CD8-positive, alpha-beta T cell (primary cell): ENCODE measurements at regions of chr1 and their contacts with region 1.

Region 1: DNA sequence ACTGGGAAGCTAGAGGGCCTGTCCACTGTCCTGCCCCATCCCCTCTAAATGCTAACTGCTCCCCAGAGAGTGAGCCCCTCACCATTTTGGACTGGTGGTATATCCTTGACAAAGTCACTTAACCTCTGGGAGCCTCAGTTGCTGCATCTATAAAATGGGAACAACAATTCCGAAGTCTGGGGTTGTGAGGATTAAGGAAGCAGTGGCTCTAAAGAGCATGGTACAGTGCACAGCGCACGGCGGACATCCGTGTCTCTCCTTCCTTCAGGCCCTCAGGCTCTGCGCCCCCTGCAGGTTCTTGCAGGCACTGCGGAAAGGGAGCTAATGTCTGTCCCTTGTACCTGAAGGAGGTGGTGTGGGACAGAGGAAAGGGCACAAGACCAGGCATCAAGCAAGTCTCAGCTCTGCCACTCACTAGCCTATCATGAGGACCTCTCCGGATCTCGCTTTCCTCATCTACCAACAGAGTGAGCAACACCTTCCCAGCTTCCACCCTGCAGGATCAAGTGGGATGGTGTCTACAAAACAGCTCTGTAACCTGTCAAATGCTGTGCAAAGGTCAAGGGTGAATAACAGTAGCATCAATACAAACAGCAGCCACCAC is 20.1 kb downstream of the ECE1 start:
- DNase-seq: peak; percentile 68 to 88 (median 80)
- ATAC-seq: peak; percentile 97
- H3K4me3 ChIP-seq: no peak overlapping the region
- H3K4me3 Mint-ChIP-seq: no peak overlapping the region
- H3K27ac ChIP-seq: no peak overlapping the region
- H3K27ac Mint-ChIP-seq: no peak overlapping the region
- H3K4me1 ChIP-seq: no peaks in the 10 kb centered on the region
- H3K4me1 Mint-ChIP-seq: peaks cover 12% of the 10 kb centered on the region
- H3K27me3 ChIP-seq: no peaks in the 10 kb centered on the region
- H3K27me3 Mint-ChIP-seq: no peaks in the 10 kb centered on the region
- CTCF ChIP-seq: peak; percentile 92

Region 2: GRCh38 chr1:21184276-21184675 is 85.9 kb before region 1 on chr1:
- CTCF ChIA-PET with region 1: no interaction called
- POLR2A ChIA-PET with region 1: no interaction called
- intact Hi-C with region 1: no loop called
- DNase-seq: no peak
- ATAC-seq: no peak
- H3K4me3 ChIP-seq: no peak overlapping the region
- H3K4me3 Mint-ChIP-seq: no peak overlapping the region
- H3K27ac ChIP-seq: no peak overlapping the region
- H3K27ac Mint-ChIP-seq: no peak overlapping the region
- H3K4me1 ChIP-seq: no peaks in the 10 kb centered on the region
- H3K4me1 Mint-ChIP-seq: no peaks in the 10 kb centered on the region
- H3K27me3 ChIP-seq: no peaks in the 10 kb centered on the region
- H3K27me3 Mint-ChIP-seq: no peaks in the 10 kb centered on the region
- CTCF ChIP-seq: no peak

Region 3: GRCh38 chr1:21232044-21232443 is 38.1 kb before region 1 on chr1:
- CTCF ChIA-PET with region 1: interaction called, 24 read pairs
- POLR2A ChIA-PET with region 1: no interaction called
- intact Hi-C with region 1: loop called in 1 of 2 experiments (anchors 1 kb)
- DNase-seq: peak in 4 of 9 experiments; percentile 32 to 69 (median 52)
- ATAC-seq: peak; percentile 73
- H3K4me3 ChIP-seq: no peak overlapping the region
- H3K4me3 Mint-ChIP-seq: no peak overlapping the region
- H3K27ac ChIP-seq: no peak overlapping the region
- H3K27ac Mint-ChIP-seq: no peak overlapping the region
- H3K4me1 ChIP-seq: no peaks in the 10 kb centered on the region
- H3K4me1 Mint-ChIP-seq: no peaks in the 10 kb centered on the region
- H3K27me3 ChIP-seq: no peaks in the 10 kb centered on the region
- H3K27me3 Mint-ChIP-seq: no peaks in the 10 kb centered on the region
- CTCF ChIP-seq: peak; percentile 90

Region 4: DNA sequence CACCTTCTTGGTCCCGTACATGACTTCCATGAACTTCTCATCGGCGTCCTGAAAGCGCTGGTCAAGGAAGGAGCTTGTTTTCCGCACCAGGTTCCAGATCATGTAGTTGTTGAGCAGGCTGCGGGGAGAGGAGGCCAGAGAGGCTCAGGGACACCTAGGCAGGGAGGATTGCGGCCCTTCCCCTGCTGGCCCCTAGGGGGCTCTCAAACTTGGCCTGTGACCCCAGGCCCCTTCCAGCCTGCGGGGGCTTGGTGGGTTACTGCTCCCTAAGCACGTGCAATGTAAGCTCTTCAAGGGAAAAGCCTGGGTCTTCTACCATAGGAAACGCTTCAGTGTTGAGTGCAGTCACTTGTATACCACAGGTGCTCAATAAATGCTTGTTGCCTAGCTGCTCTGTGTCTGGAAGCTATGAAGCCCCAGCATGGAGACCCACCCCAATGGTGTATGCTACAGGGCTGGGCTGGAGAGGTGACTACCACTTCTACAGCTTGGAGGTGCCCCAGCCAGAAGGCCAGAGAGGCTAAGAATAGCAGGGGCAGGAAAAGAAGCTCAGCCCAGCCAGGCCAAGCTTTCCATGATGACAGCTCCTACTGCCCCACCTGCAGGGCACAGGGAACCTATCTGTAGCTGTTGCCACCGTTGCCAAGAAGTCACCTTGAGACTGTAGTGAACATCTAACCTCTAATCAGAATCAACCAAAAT is 25.1 kb before region 1 on chr1:
- CTCF ChIA-PET with region 1: interaction called, 16 read pairs
- POLR2A ChIA-PET with region 1: no interaction called
- intact Hi-C with region 1: no loop called
- DNase-seq: no peak
- ATAC-seq: no peak
- H3K4me3 ChIP-seq: no peak overlapping the region
- H3K4me3 Mint-ChIP-seq: no peak overlapping the region
- H3K27ac ChIP-seq: no peak overlapping the region
- H3K27ac Mint-ChIP-seq: no peak overlapping the region
- H3K4me1 ChIP-seq: no peaks in the 10 kb centered on the region
- H3K4me1 Mint-ChIP-seq: peaks cover 2% of the 10 kb centered on the region
- H3K27me3 ChIP-seq: no peaks in the 10 kb centered on the region
- H3K27me3 Mint-ChIP-seq: no peaks in the 10 kb centered on the region
- CTCF ChIP-seq: no peak

Region 5: DNA sequence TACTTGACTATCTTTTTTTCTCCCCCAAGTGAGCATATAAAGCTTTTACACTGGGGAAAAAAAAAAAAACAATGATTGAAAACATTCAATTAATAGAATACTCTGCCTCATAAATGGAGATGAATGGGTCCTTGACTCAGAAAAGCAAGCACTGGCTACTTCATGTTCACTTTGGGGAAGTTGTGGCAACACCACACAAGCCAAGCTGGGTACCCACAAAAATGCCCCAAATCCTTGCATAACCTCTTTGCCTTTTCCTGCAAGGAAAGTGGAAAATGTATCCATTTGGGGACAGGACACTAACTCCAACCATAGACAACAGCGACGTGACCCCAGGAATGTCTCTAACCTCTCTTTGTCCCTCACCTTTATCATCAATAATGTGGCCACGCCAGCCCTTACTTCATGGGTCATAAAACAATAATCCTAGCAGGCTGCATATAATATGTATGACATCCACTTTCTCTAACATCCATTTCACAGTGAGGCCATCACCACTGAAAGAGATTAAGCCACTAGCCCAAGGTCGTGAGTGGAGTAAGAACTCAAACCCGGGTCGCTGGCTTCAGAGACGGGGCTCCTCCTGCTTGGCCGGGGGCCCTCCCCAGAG is 17.8 kb after region 1 on chr1:
- CTCF ChIA-PET with region 1: interaction called, 52 read pairs
- POLR2A ChIA-PET with region 1: interaction called, 19 read pairs
- intact Hi-C with region 1: no loop called
- DNase-seq: no peak
- ATAC-seq: no peak
- H3K4me3 ChIP-seq: no peak overlapping the region
- H3K4me3 Mint-ChIP-seq: peak overlapping the region; percentile 40
- H3K27ac ChIP-seq: no peak overlapping the region
- H3K27ac Mint-ChIP-seq: peak overlapping the region; percentile 37
- H3K4me1 ChIP-seq: peaks cover 50% of the 10 kb centered on the region
- H3K4me1 Mint-ChIP-seq: peaks cover 51% of the 10 kb centered on the region
- H3K27me3 ChIP-seq: no peaks in the 10 kb centered on the region
- H3K27me3 Mint-ChIP-seq: no peaks in the 10 kb centered on the region
- CTCF ChIP-seq: no peak

Region 6: GRCh38 chr1:21294266-21294989 is 24.2 kb after region 1 on chr1:
- CTCF ChIA-PET with region 1: interaction called, 34 read pairs
- POLR2A ChIA-PET with region 1: interaction called, 19 read pairs
- intact Hi-C with region 1: no loop called
- DNase-seq: peak; percentile 71 to 97 (median 85)
- ATAC-seq: peak; percentile 72
- H3K4me3 ChIP-seq: peak overlapping the region; percentile 44 to 86
- H3K4me3 Mint-ChIP-seq: peak overlapping the region; percentile 86
- H3K27ac ChIP-seq: peak overlapping the region; percentile 91 to 94
- H3K27ac Mint-ChIP-seq: peak overlapping the region; percentile 98
- H3K4me1 ChIP-seq: peaks cover 80% of the 10 kb centered on the region
- H3K4me1 Mint-ChIP-seq: peaks cover 82% of the 10 kb centered on the region
- H3K27me3 ChIP-seq: no peaks in the 10 kb centered on the region
- H3K27me3 Mint-ChIP-seq: no peaks in the 10 kb centered on the region
- CTCF ChIP-seq: no peak

Region 7: DNA sequence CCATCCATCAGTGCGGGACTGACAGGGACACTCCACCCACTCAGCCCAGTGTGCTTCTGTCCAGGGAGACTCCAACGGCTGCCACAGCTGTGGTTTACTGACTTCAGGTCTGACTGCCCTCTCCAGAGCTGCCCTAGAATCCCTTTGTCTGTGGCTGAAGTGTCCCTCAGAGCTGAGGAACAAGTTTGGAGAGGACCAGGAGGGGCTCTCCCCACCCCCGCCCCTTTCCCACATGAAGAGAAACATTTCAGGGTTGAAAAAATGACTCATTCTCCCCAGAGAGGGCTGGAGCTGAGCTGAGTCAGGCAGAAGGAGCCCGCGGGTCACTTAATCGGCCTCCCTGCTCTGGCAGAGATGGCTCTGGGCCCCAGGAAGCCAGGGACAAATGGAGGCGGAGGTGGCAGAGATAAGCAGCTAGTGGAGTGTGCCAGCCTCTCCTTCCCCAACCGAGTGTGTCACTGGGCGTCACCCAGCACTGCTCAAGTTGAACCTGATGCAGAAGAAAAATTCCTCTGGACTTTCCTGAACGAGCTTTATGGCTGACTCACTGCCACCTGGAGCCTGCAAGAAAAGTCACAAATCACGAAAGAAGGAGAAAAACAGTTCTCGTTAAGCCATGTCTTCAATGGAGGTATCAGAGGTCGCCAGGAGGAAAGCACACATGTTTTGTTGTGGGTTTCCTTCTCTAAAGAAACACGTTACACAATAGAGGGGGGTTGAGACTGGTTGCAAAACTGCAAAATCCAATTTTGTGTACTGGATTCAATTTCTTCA is 54.4 kb after region 1 on chr1:
- CTCF ChIA-PET with region 1: interaction called, 99 read pairs
- POLR2A ChIA-PET with region 1: no interaction called
- intact Hi-C with region 1: no loop called
- DNase-seq: peak in 8 of 9 experiments; percentile 26 to 71 (median 64)
- ATAC-seq: peak; percentile 64
- H3K4me3 ChIP-seq: peak overlapping the region in 1 of 2 experiments; percentile 4
- H3K4me3 Mint-ChIP-seq: peak overlapping the region; percentile 76
- H3K27ac ChIP-seq: peak overlapping the region; percentile 13 to 51
- H3K27ac Mint-ChIP-seq: peak overlapping the region; percentile 96
- H3K4me1 ChIP-seq: peaks cover 61% of the 10 kb centered on the region
- H3K4me1 Mint-ChIP-seq: peaks cover 74% of the 10 kb centered on the region
- H3K27me3 ChIP-seq: no peaks in the 10 kb centered on the region
- H3K27me3 Mint-ChIP-seq: no peaks in the 10 kb centered on the region
- CTCF ChIP-seq: no peak

Region 8: DNA sequence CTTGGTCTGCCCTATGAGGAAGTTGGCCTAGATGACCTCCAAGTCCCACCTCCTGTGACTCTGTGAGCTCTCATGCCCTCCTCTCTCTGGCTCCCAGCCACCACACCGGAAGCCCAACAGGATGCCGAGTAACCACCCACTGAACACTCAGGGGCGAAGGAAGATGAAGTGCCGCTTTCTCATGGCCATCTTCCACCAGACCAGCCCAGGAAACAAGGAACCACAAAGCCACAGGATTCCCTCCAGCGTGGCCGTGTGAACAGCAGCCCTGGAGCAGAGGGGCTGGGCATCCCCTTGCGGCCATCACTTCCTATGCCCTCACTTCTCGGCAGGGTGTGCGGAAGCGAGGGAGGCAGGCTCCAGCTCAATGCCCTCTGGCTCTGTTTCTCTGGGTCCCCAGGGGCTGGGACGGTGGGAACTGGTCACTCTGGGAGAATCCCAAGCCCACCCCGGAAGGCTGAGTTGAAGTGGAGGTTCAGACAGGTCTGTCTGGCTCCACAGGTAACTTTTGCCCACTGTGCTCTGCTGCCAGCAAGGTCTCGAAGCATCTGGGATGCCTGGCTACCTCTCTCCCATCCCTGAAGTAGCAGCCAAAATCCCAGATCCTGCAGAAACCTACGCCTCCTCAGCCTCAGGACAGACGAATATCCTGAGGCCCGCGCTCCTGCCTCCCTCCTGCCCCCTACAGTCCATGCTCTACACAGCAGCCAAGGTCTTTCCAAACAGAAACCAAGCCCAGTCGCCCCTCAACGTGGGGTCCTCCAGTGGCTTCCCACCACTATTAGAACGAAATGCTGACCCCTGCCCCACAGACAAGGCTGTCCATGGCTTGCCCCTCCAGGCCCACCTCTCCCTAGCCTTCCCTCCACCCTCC is 64.3 kb after region 1 on chr1:
- CTCF ChIA-PET with region 1: interaction called, 99 read pairs
- POLR2A ChIA-PET with region 1: interaction called, 4 read pairs
- intact Hi-C with region 1: loop called in 1 of 2 experiments (anchors 2 kb)
- DNase-seq: peak; percentile 68 to 94 (median 84)
- ATAC-seq: peak; percentile 86
- H3K4me3 ChIP-seq: peak overlapping the region; percentile 29 to 47
- H3K4me3 Mint-ChIP-seq: peak overlapping the region; percentile 88
- H3K27ac ChIP-seq: peak overlapping the region; percentile 57 to 89
- H3K27ac Mint-ChIP-seq: peak overlapping the region; percentile 98
- H3K4me1 ChIP-seq: peaks cover 84% of the 10 kb centered on the region
- H3K4me1 Mint-ChIP-seq: peaks cover 85% of the 10 kb centered on the region
- H3K27me3 ChIP-seq: no peaks in the 10 kb centered on the region
- H3K27me3 Mint-ChIP-seq: no peaks in the 10 kb centered on the region
- CTCF ChIP-seq: peak; percentile 58

Region 9: GRCh38 chr1:21801100-21801499 is 530.9 kb after region 1 on chr1:
- CTCF ChIA-PET with region 1: no interaction called
- POLR2A ChIA-PET with region 1: no interaction called
- intact Hi-C with region 1: no loop called
- DNase-seq: no peak
- ATAC-seq: no peak
- H3K4me3 ChIP-seq: no peak overlapping the region
- H3K4me3 Mint-ChIP-seq: no peak overlapping the region
- H3K27ac ChIP-seq: no peak overlapping the region
- H3K27ac Mint-ChIP-seq: no peak overlapping the region
- H3K4me1 ChIP-seq: no peaks in the 10 kb centered on the region
- H3K4me1 Mint-ChIP-seq: no peaks in the 10 kb centered on the region
- H3K27me3 ChIP-seq: no peaks in the 10 kb centered on the region
- H3K27me3 Mint-ChIP-seq: peaks cover 3% of the 10 kb centered on the region
- CTCF ChIP-seq: no peak

Region 10: GRCh38 chr1:22582661-22583635 is 1312.8 kb after region 1 on chr1:
- CTCF ChIA-PET with region 1: no interaction called
- POLR2A ChIA-PET with region 1: no interaction called
- intact Hi-C with region 1: no loop called
- DNase-seq: no peak
- ATAC-seq: no peak
- H3K4me3 ChIP-seq: no peak overlapping the region
- H3K4me3 Mint-ChIP-seq: no peak overlapping the region
- H3K27ac ChIP-seq: no peak overlapping the region
- H3K27ac Mint-ChIP-seq: no peak overlapping the region
- H3K4me1 ChIP-seq: no peaks in the 10 kb centered on the region
- H3K4me1 Mint-ChIP-seq: no peaks in the 10 kb centered on the region
- H3K27me3 ChIP-seq: no peaks in the 10 kb centered on the region
- H3K27me3 Mint-ChIP-seq: peaks cover 5% of the 10 kb centered on the region
- CTCF ChIP-seq: no peak